Activated CD4-positive, alpha-beta T cell treated with anti-CD3 and anti-CD28 coated beads for 36 hours (primary cell): ENCODE measurements at regions of chrX and their contacts with region 1.

Region 1: DNA sequence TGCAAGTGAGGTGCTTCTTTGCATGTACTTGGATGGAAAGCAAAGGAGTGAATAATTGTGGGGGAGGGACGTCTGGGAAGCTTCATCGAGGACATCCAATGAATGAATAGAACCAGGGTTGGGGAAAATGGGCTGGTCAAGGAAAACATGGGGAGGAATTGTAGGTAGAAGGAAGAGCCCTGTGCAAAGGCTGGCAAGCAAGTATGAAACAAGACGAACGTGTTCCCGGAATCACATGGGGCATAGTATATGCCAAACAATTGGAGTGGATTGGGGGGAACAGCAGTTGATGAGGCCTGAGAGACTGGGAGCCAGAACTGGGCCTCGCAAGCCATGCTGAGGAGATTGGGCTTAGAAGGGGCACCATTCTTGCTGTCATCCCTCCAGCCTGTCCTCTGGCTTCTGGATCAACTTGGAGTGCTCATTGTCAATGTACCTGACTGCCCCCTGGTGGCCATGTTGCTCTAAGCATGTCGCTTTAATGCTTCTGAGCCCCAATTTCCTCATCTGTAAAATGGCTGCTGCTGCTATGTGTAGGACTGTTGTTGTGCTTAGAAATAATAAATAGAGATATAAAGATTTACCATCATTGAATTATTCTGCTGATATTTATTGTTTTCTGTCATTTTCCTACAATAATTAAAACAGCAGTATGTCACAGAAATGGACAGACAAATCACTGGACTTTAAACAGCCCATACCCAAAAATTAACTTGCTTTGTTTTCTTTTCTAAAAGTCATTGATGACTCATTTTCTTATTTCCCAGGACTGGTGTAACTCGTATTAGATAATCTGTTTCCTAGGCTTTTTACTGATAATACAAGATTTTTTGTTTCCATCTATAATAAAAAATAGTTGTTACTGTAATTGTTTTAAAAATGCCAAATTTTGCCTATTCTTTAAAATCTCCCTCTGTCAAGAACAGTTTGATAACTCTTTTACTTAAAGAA is 66.4 kb downstream of the JADE3 start:
- DNase-seq: peak; percentile 88
- ATAC-seq: peak; percentile 86
- H3K4me3 Mint-ChIP-seq: no peak overlapping the region
- H3K27ac Mint-ChIP-seq: no peak overlapping the region
- H3K4me1 Mint-ChIP-seq: no peaks in the 10 kb centered on the region
- H3K27me3 Mint-ChIP-seq: no peaks in the 10 kb centered on the region

Region 2: GRCh38 chrX:46841346-46841745 is 137.3 kb before region 1 on chrX:
- CTCF ChIA-PET with region 1: no interaction called
- POLR2A ChIA-PET with region 1: no interaction called
- intact Hi-C with region 1: no loop called
- DNase-seq: no peak
- ATAC-seq: no peak
- H3K4me3 Mint-ChIP-seq: no peak overlapping the region
- H3K27ac Mint-ChIP-seq: no peak overlapping the region
- H3K4me1 Mint-ChIP-seq: peaks cover 5% of the 10 kb centered on the region
- H3K27me3 Mint-ChIP-seq: no peaks in the 10 kb centered on the region

Region 3: DNA sequence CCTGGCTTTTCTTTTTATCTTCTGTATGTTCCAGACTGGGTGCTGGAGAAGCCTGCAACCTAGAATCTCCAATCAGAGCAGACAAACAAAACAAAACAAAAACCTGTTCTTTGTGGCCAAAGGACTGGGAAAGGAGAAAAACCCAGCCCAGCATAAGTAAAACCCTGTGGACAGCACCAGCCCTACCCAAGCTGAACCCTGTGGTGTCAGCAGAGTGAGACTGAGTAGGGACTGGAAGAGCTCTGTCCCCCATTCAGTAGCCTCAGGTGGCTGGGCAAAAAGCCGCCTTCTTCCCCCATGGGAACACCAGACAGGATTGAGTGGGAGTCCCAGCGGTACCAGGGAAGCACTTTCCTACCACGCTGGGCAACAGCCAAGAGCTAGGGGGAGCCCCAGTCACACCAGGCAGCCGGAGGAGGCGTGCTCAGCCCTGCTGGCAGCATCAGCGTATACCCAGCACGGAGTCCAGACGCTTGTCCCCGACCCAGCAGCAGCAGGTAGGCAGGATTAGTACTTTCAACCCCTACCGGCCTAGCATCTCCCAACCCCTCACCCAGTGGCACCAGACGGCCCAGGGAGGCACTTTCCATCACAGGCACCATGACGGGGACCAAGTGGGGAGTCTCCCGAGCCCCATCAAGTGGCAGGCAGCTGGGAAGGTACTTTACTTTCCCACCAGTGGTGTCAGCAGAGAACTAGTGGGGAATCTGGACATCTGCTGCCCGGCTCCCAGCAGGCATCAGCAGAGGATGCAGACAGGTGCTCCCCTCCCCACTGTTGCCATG is 75.0 kb before region 1 on chrX:
- CTCF ChIA-PET with region 1: interaction called, 3 read pairs
- POLR2A ChIA-PET with region 1: no interaction called
- intact Hi-C with region 1: loop called (anchors 1 kb)
- DNase-seq: peak; percentile 73
- ATAC-seq: peak; percentile 98
- H3K4me3 Mint-ChIP-seq: peak overlapping the region; percentile 46
- H3K27ac Mint-ChIP-seq: no peak overlapping the region
- H3K4me1 Mint-ChIP-seq: peaks cover 2% of the 10 kb centered on the region
- H3K27me3 Mint-ChIP-seq: peaks cover 3% of the 10 kb centered on the region

Region 4: GRCh38 chrX:46912098-46912602 is 66.5 kb before region 1 on chrX and contains the start of gene JADE3:
- CTCF ChIA-PET with region 1: no interaction called
- POLR2A ChIA-PET with region 1: no interaction called
- intact Hi-C with region 1: loop called in 1 of 2 experiments (anchors 2 kb)
- DNase-seq: peak; percentile 47
- ATAC-seq: peak; percentile 24
- H3K4me3 Mint-ChIP-seq: peak within 1 kb of the TSS; percentile 71
- H3K27ac Mint-ChIP-seq: no peak within 1 kb of the TSS
- H3K4me1 Mint-ChIP-seq: peaks cover 10% of the 10 kb centered on the region
- H3K27me3 Mint-ChIP-seq: peaks cover 31% of the 10 kb centered on the region
- total RNA-seq, gene JADE3: 1.5 to 2.7 TPM